Activated CD8-positive, alpha-beta memory T cell treated with anti-CD3 and anti-CD28 coated beads, Interleukin-2, amount 10 ng/mL, durations not matched to agents 7 days and 5 days (primary cell): ENCODE measurements at regions of chr1 and their contacts with region 1.

Region 1: GRCh38 chr1:46179138-46180081 is 3.1 kb upstream of the P3R3URF start:
- DNase-seq: peak; percentile 74
- ATAC-seq: peak; percentile 81
- H3K4me3 Mint-ChIP-seq: no peak overlapping the region
- H3K27ac Mint-ChIP-seq: no peak overlapping the region
- H3K4me1 Mint-ChIP-seq: peaks cover 4% of the 10 kb centered on the region
- H3K27me3 Mint-ChIP-seq: no peaks in the 10 kb centered on the region

Region 2: GRCh38 chr1:45979074-45979777 is 200.2 kb before region 1 on chr1:
- CTCF ChIA-PET with region 1: no interaction called
- DNase-seq: no peak
- ATAC-seq: no peak
- H3K4me3 Mint-ChIP-seq: no peak overlapping the region
- H3K27ac Mint-ChIP-seq: no peak overlapping the region
- H3K4me1 Mint-ChIP-seq: no peaks in the 10 kb centered on the region
- H3K27me3 Mint-ChIP-seq: no peaks in the 10 kb centered on the region

Region 3: GRCh38 chr1:46036894-46037839 is 142.2 kb before region 1 on chr1:
- CTCF ChIA-PET with region 1: interaction called, 21 read pairs
- DNase-seq: peak; percentile 87
- ATAC-seq: peak; percentile 84
- H3K4me3 Mint-ChIP-seq: no peak overlapping the region
- H3K27ac Mint-ChIP-seq: no peak overlapping the region
- H3K4me1 Mint-ChIP-seq: peaks cover 2% of the 10 kb centered on the region
- H3K27me3 Mint-ChIP-seq: no peaks in the 10 kb centered on the region

Region 4: DNA sequence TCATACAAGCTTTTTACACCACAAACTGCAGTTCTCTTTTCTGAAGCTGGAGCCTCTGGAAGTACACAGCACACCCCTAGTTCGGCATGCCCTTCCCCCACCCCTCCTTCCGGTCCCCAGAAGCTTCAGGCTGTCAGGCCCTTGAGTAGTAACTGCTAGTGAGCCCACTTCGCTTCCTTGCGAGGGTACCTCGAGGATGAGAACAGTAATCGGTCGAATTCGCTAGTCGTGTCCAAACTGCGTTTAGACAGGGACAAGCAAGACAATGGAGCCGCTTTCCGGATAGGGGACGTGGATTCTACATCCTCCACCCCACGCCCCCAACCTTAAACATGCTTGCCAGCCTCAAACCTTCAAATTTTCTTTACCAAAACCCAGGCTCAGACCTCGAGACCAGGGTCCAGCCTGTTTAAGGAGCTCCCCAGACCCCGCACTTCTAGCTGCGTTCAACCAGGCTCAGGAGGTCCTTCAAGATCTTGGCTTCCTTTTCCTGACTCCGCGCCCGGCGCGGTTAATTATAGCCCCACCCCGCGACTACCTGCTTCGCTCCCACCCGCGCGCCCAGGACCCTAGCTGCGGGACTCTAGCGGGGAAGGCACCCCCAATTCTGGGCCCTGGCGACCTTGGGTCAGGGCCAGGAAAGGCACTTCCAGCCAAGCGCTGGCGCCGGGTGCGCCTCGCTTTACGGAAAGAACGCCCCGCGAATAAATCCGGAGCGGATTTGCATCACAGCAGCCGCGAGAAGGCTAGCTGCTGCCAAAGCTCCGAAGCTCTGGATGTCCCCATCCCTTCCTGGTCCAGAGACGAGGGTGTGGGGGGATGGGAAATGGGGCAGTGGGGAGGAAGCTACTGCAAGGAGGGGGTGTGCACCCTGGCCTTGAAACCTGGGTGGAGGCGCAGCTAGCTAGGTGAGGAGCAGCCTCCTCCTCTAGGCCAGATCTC is 12.6 kb before region 1 on chr1:
- CTCF ChIA-PET with region 1: interaction called, 10 read pairs
- DNase-seq: peak; percentile 68
- ATAC-seq: peak; percentile 81
- H3K4me3 Mint-ChIP-seq: peak overlapping the region; percentile 77
- H3K27ac Mint-ChIP-seq: peak overlapping the region; percentile 85
- H3K4me1 Mint-ChIP-seq: peaks cover 17% of the 10 kb centered on the region
- H3K27me3 Mint-ChIP-seq: peaks cover 22% of the 10 kb centered on the region